ENCODE measurements at regions of chr10 and their contacts with region 1.

Region 1: GRCh38 chr10:112803961-112804401 is 146.1 kb upstream of the TCF7L2 start:
- DNase-seq: peak; percentile 30
- H3K4me3 Mint-ChIP-seq: peak overlapping the region; percentile 37
- H3K27ac Mint-ChIP-seq: peak overlapping the region; percentile 85
- H3K4me1 Mint-ChIP-seq: peaks cover 51% of the 10 kb centered on the region
- H3K27me3 Mint-ChIP-seq: no peaks in the 10 kb centered on the region
- CTCF ChIP-seq: no peak

Region 2: DNA sequence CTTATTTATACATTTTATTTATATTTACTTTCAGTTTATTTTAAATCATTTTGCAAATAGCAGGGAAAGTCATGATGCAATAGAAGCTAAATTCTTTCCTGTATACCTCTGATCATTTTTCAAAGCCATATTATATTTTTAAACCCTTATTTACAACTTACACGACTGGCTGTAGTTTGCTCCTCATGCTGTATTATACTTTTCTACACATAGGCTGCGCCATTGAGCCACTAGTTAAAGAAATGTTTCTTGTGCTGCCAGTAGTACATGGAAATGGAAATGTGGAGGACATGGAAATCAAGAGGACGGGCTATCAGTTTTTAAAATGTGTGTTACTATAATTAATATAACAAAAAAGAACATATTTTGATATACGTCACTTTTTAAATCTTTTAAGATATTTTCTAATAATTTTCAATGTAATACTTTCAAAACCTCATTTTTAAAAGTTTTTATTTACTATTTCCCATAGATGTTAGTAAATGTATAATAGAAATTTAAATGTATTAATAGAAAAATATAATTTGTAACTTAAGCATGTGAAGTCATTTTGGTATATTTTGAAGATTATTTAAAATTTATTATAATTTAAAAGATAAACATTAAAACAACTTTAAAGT is 238.4 kb before region 1 on chr10:
- CTCF ChIA-PET with region 1: no interaction called
- intact Hi-C with region 1: loop called (anchors 10 kb)
- DNase-seq: peak; percentile 49
- H3K4me3 Mint-ChIP-seq: no peak overlapping the region
- H3K27ac Mint-ChIP-seq: no peak overlapping the region
- H3K4me1 Mint-ChIP-seq: no peaks in the 10 kb centered on the region
- H3K27me3 Mint-ChIP-seq: no peaks in the 10 kb centered on the region
- CTCF ChIP-seq: no peak

Region 3: DNA sequence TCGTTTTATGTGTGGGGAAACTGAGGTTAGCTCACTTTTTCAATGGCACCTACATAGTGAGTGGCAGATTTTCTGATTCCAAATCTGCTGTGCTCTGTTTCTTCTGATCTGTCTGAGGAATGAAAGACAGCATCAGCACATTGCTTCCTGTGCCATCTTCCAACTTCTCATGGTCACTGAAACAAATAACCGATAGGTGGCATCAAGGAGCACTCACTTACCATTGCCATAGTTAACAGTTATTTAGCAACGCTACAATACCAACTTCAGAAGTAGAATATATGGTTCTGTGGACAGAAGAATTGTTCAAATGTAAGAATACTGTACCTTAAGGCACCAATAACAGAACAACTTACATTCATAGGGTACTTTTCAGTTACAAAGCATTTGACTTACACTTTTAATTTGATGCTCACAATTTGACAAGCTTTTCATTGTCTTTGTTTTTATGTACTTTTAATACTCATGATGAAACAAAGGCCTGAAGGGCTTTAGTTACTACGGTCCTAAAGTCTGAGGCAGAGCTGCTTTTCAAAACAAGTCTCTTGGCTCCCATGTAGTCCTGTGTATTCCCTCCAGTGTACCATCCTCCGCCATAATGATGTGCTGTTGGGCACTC is 82.8 kb before region 1 on chr10:
- CTCF ChIA-PET with region 1: no interaction called
- intact Hi-C with region 1: loop called (anchors 1 kb)
- DNase-seq: peak; percentile 19
- H3K4me3 Mint-ChIP-seq: no peak overlapping the region
- H3K27ac Mint-ChIP-seq: no peak overlapping the region
- H3K4me1 Mint-ChIP-seq: peaks cover under 1% of the 10 kb centered on the region
- H3K27me3 Mint-ChIP-seq: no peaks in the 10 kb centered on the region
- CTCF ChIP-seq: peak; percentile 44